A549 (cell line): ENCODE measurements at regions of chr7 and their contacts with region 1.

Region 1: GRCh38 chr7:131688738-131689661 is 132.6 kb upstream of the PODXL start:
- DNase-seq: peak; percentile 57 to 94
- ATAC-seq: peak; percentile 73 to 84
- H3K4me3 ChIP-seq: no peak overlapping the region
- H3K27ac ChIP-seq: no peak overlapping the region
- H3K4me1 ChIP-seq: no peaks in the 10 kb centered on the region
- CTCF ChIP-seq: peak; percentile 92
- EP300 ChIP-seq: no peak
- POLR2A ChIP-seq: no peak
- RAD21 ChIP-seq: peak; percentile 94 to 97

Region 2: GRCh38 chr7:131674131-131674530 is 14.9 kb before region 1 on chr7:
- CTCF ChIA-PET with region 1: interaction called, 17 read pairs
- POLR2A ChIA-PET with region 1: no interaction called
- DNase-seq: no peak
- ATAC-seq: 0 out of 6 replicates have a peak, but pooled peaks of 1 of the 2 experiments have one; percentile 35
- H3K4me3 ChIP-seq: no peak overlapping the region
- H3K27ac ChIP-seq: no peak overlapping the region
- H3K4me1 ChIP-seq: no peaks in the 10 kb centered on the region
- CTCF ChIP-seq: no peak
- EP300 ChIP-seq: no peak
- POLR2A ChIP-seq: no peak
- RAD21 ChIP-seq: no peak

Region 3: DNA sequence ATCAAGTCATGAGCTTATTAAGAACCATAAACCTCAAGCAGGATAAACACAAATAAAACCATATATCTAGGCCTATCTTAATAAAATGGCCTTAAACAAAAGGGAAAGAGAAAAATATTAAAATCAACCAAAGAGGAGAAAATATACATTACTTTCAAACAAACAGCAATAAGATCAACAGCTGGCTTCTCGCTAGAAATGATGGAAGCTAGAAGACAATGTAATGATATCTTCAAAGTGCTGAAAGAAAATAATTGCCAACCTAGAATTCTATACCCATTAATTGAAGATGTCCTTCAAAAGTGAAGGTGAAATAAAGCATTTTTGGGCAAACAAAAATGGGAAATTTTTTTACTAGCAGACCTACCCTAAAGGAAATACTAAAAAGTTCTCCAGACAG is 10.3 kb after region 1 on chr7:
- CTCF ChIA-PET with region 1: interaction called, 69 read pairs
- POLR2A ChIA-PET with region 1: no interaction called
- DNase-seq: no peak
- ATAC-seq: no peak
- H3K4me3 ChIP-seq: no peak overlapping the region
- H3K27ac ChIP-seq: no peak overlapping the region
- H3K4me1 ChIP-seq: no peaks in the 10 kb centered on the region
- CTCF ChIP-seq: no peak
- EP300 ChIP-seq: no peak
- POLR2A ChIP-seq: no peak
- RAD21 ChIP-seq: no peak